ENCODE measurements at regions of chr11 and their contacts with region 1.

Region 1: DNA sequence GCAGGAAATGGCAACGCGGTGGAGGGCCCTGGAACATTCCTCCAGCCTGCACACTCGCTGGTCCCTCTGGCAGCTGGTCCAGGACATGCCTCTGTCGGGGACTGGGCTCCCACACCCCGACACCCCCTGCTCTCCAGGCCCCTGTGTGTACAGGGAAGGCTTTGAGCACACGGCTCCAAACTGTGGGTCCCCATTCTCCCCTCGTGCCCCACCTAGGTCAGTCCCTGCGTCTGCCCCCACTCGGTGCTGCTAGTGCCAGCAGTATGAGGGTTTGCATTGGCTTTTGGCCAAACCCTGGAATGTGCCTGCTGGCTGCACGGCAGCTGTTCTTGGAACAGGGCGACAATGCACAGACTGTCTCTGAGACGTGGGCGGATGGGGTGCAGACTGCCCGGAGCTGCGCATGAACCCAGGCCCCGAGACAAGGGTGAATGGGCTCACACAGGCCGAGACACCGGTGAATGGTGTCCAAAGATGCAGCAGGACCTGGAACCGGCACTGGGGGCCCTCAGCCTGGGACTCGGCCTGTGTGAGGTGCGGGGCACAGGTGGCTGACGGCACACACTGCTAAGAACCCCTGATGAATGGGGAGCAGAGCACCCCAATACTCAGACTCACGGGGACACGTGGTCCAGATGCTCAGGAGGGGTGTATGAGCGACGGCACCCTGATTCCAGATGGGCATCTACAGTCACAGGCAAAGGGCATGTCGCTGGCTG is 7.5 kb upstream of the SYT8 start:
- DNase-seq: peak in 1 of 2 experiments; percentile 33
- H3K4me3 ChIP-seq: no peak overlapping the region
- H3K4me3 Mint-ChIP-seq: no peak overlapping the region
- H3K27ac Mint-ChIP-seq: peak overlapping the region; percentile 87
- H3K4me1 ChIP-seq: peaks cover 66% of the 10 kb centered on the region
- H3K4me1 Mint-ChIP-seq: peaks cover 39% of the 10 kb centered on the region
- H3K27me3 ChIP-seq: no peaks in the 10 kb centered on the region
- H3K27me3 Mint-ChIP-seq: no peaks in the 10 kb centered on the region
- CTCF ChIP-seq: no peak

Region 2: GRCh38 chr11:1515082-1516060 is 311.9 kb before region 1 on chr11:
- CTCF ChIA-PET with region 1: no interaction called
- POLR2A ChIA-PET with region 1: no interaction called
- intact Hi-C with region 1: no loop called
- DNase-seq: peak; percentile 55 to 77
- H3K4me3 ChIP-seq: no peak overlapping the region
- H3K4me3 Mint-ChIP-seq: no peak overlapping the region
- H3K27ac Mint-ChIP-seq: no peak overlapping the region
- H3K4me1 ChIP-seq: no peaks in the 10 kb centered on the region
- H3K4me1 Mint-ChIP-seq: peaks cover 12% of the 10 kb centered on the region
- H3K27me3 ChIP-seq: no peaks in the 10 kb centered on the region
- H3K27me3 Mint-ChIP-seq: no peaks in the 10 kb centered on the region
- CTCF ChIP-seq: peak; percentile 68 to 84

Region 3: GRCh38 chr11:1807264-1807995 is 19.8 kb before region 1 on chr11:
- CTCF ChIA-PET with region 1: interaction called, 11 read pairs
- POLR2A ChIA-PET with region 1: no interaction called
- intact Hi-C with region 1: no loop called
- DNase-seq: peak; percentile 41 to 53
- H3K4me3 ChIP-seq: no peak overlapping the region
- H3K4me3 Mint-ChIP-seq: peak overlapping the region; percentile 58
- H3K27ac Mint-ChIP-seq: peak overlapping the region; percentile 19
- H3K4me1 ChIP-seq: peaks cover 12% of the 10 kb centered on the region
- H3K4me1 Mint-ChIP-seq: peaks cover 16% of the 10 kb centered on the region
- H3K27me3 ChIP-seq: no peaks in the 10 kb centered on the region
- H3K27me3 Mint-ChIP-seq: no peaks in the 10 kb centered on the region
- CTCF ChIP-seq: peak; percentile 40 to 46

Region 4: DNA sequence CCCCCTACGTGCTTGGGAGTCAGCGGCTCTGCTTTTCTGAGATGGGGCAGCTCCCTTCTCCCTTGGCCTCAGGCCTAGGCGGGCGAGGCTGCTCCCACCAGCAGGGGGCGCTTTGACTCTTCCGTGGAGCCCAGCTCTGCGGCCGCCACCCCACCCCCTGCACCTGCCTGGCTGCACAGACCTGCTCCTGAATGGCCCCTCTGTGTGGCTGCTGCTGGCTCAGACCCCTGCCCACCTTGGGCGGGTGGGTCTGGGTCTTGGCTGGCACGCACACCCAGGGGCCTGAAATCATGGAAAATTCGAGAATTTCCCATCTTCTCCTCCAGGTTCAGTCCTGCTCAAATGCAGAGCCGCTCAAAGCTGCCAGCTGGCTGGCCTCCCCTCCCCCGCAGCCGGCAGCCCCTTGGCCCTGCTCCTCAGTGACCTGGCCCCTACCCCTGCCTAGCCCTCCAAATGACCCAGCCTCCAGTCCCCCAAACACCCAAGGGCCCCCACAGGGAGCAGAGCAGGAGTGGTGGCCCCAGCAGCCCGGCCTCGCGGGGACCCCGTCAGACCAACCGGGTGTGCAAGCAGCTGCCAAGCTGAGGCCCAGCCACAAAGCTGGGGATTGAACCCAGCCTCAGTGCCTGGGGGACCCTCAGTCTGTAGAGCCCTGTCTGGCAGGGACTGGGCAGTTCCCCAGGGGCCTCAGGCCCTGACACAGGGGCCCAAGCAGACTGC is 55.4 kb after region 1 on chr11:
- CTCF ChIA-PET with region 1: interaction called, 28 read pairs
- POLR2A ChIA-PET with region 1: no interaction called
- intact Hi-C with region 1: loop called (anchors 5 kb)
- DNase-seq: peak; percentile 76 to 87
- H3K4me3 ChIP-seq: no peak overlapping the region
- H3K4me3 Mint-ChIP-seq: no peak overlapping the region
- H3K27ac Mint-ChIP-seq: no peak overlapping the region
- H3K4me1 ChIP-seq: peaks cover 8% of the 10 kb centered on the region
- H3K4me1 Mint-ChIP-seq: no peaks in the 10 kb centered on the region
- H3K27me3 ChIP-seq: no peaks in the 10 kb centered on the region
- H3K27me3 Mint-ChIP-seq: no peaks in the 10 kb centered on the region
- CTCF ChIP-seq: peak; percentile 89 to 95

Region 5: DNA sequence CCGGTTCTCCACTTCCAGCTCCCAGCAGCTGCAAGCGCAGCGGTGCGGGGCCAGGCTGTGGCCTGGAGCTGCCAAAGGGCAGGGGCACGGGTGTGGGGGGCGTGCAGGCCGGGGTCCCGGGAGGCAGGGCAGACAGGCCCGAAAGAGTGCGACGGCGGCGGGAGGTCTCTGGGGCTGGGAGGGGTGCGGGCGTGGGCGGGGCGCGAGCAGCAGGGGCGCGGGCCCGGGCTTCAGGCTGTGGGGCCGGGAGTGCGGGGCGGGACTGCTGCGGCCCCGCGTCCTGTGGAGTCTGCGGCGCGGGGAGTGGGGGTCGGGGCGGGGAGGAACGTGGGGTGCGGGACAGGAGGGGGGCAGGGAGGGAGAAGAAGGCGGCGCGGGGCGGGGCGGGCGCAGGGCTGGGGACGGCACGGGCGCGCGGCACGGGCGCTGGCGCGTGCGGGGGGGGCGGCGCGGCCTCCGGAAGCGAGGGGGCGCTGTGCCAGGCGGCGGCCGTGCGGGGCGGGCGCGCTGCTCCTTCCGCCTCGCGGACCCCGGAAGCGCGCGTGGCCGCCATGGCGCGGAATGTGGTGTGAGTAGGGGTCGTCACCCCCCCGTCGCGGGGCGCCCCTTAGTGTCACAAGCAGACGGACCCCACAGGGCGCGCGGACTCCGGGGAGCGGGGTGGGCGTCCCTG is 119.7 kb after region 1 on chr11 and contains the start of gene MRPL23:
- CTCF ChIA-PET with region 1: interaction called, 10 read pairs
- POLR2A ChIA-PET with region 1: no interaction called
- intact Hi-C with region 1: no loop called
- DNase-seq: no peak
- H3K4me3 ChIP-seq: no peak within 1 kb of the TSS
- H3K4me3 Mint-ChIP-seq: no peak within 1 kb of the TSS
- H3K27ac Mint-ChIP-seq: no peak within 1 kb of the TSS
- H3K4me1 ChIP-seq: no peaks in the 10 kb centered on the region
- H3K4me1 Mint-ChIP-seq: no peaks in the 10 kb centered on the region
- H3K27me3 ChIP-seq: no peaks in the 10 kb centered on the region
- H3K27me3 Mint-ChIP-seq: no peaks in the 10 kb centered on the region
- CTCF ChIP-seq: no peak
- total RNA-seq, gene MRPL23: 7.8 and 15.0 TPM in 2 replicates

Region 6: GRCh38 chr11:2314525-2315394 is 487.5 kb after region 1 on chr11:
- CTCF ChIA-PET with region 1: no interaction called
- POLR2A ChIA-PET with region 1: no interaction called
- intact Hi-C with region 1: no loop called
- DNase-seq: no peak
- H3K4me3 ChIP-seq: no peak overlapping the region
- H3K4me3 Mint-ChIP-seq: no peak overlapping the region
- H3K27ac Mint-ChIP-seq: no peak overlapping the region
- H3K4me1 ChIP-seq: no peaks in the 10 kb centered on the region
- H3K4me1 Mint-ChIP-seq: no peaks in the 10 kb centered on the region
- H3K27me3 ChIP-seq: no peaks in the 10 kb centered on the region
- H3K27me3 Mint-ChIP-seq: no peaks in the 10 kb centered on the region
- CTCF ChIP-seq: no peak